Stomach (tissue), 19 donors: ENCODE measurements at regions of chr11 and their contacts with region 1.

Region 1: DNA sequence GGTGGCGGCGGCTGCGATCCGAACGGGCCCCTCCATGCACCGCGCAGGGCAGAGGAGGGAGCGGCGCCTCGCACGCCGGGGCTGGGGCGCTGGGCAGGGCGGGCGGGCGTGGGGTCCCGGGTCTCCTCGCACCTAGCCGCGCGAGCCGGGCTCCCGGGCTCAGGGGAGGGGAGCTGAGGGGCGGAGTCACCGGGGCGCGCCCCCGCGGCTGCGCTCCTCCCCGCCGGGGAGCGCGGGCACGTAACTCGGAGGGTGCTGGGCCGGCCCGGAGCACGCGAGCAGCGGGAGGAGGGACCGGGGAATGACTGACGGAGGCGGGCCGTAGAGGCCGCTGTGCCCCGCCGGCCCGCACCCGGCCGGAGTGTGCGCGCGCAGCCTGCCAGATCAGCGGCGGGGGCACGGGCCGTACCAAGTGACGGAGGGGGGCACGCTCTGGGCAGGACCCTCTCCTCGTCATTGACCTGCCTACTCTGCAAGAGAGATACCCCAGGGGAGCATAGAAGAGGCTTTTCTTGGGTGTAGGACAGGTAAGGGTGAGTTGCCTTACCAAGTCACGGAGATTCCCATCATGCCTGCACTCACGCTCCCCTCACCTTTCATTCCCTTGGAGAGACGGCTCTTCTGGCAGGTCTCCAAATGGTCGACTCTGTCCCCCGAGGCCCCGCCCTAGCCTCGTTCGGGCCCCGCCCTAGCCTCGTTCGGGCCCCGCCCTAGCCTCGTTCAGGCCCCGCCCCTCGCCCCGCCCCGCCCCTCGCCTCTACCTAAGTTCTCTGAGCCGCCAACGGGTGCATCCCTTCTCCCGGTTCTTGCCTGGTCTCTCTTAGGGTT is at the start of gene CDON:
- DNase-seq: peak; percentile 95 to 98
- H3K4me3 ChIP-seq: peak within 1 kb of the TSS; percentile 75 to 93 (median 78)
- H3K27ac ChIP-seq: peak within 1 kb of the TSS; percentile 78 to 87 (median 80)
- H3K4me1 ChIP-seq: peaks cover 0 to 32% (median 18%) of the 10 kb centered on the region in 4 donors
- H3K27me3 ChIP-seq: peaks cover 0 to 24% (median 4%) of the 10 kb centered on the region in 3 donors
- CTCF ChIP-seq: peak in 2 of 7 experiments; percentile 31 to 32
- EP300 ChIP-seq: no peak
- POLR2A ChIP-seq: no peak
- total RNA-seq, gene CDON: 16.1 to 80.8 (median 26.8) TPM

Region 2: GRCh38 chr11:125923012-125923579 is 139.8 kb before region 1 on chr11:
- intact Hi-C with region 1: loop called (anchors 10 kb)
- DNase-seq: peak; percentile 63 to 92
- H3K4me3 ChIP-seq: no peak overlapping the region
- H3K27ac ChIP-seq: no peak overlapping the region
- H3K4me1 ChIP-seq: peaks cover 0 to 12% (median 0%) of the 10 kb centered on the region in 4 donors
- H3K27me3 ChIP-seq: peaks cover 0 to 52% (median 13%) of the 10 kb centered on the region in 3 donors
- CTCF ChIP-seq: peak in 5 of 7 experiments; percentile 54 to 68 (median 64)
- EP300 ChIP-seq: no peak
- POLR2A ChIP-seq: no peak

Region 3: DNA sequence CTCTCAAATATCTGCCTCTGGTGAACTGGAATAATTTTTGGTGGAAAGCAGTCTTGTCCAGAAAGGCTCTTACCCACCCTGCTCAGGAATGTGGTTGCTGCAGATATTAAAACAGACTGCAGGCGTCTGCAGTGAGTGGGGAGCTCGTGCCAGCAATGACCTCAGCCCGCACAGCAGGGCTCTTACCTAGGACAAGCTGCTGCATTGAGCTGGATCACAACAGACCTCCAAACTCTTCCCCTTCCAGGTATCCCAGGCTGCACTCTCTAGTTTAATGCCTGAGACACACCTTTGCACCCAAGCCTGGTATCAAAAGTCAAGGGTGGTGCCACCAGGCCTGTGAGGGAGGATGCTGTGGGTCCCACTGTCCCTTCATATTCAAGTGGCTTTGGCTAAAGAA is 69.4 kb after region 1 on chr11:
- intact Hi-C with region 1: loop called (anchors 10 kb)
- DNase-seq: peak; percentile 70 to 91
- H3K4me3 ChIP-seq: no peak overlapping the region
- H3K27ac ChIP-seq: peak overlapping the region in 2 of 5 donors; percentile 39 to 58
- H3K4me1 ChIP-seq: peaks cover 9 to 67% (median 44%) of the 10 kb centered on the region in 4 donors
- H3K27me3 ChIP-seq: peaks cover 0 to 5% (median 0%) of the 10 kb centered on the region in 3 donors
- CTCF ChIP-seq: no peak
- EP300 ChIP-seq: no peak
- POLR2A ChIP-seq: no peak

Region 4: DNA sequence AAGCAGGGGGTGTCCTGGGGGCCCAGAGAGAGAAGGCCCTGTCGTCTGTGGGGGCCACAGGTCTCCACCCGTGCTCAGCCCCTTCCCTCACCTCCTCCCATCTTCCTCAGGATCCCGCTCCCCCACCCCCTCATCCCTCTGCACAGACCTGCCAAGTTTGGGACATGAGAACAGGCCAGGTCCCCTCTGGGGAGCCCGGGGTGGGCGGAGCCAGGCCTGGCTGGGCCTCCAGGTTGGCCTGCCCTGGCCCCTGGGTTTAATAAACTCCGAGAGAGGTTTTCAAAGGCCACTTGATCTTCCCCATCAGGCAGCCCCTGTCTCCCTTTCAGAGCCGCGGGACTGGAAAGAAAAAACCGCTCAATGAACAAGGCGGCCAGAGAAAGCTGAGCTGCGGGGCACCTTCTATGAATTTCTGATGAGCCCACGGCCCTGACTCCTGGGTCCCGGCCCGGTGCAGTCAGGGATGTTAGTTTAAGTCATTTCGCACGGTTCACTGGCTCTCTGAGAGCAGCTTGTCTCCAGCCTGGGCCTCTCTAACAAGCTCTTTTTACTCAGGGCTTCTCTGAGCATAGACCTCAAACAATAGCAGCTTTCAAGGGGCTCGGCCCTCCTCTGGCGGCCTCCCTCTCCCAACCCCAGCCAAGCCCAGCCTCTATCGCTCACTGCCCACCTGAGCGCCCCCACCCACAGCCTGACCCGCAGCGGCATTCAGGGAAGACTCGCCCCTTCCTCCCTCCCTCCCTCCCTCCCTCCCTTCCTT is 83.7 kb after region 1 on chr11:
- intact Hi-C with region 1: no loop called
- DNase-seq: peak in 1 of 2 donors; percentile 64
- H3K4me3 ChIP-seq: no peak overlapping the region
- H3K27ac ChIP-seq: peak overlapping the region in 1 of 5 donors; percentile 2
- H3K4me1 ChIP-seq: peaks cover 0 to 20% (median 10%) of the 10 kb centered on the region in 4 donors
- H3K27me3 ChIP-seq: peaks cover 0 to 5% (median 0%) of the 10 kb centered on the region in 3 donors
- CTCF ChIP-seq: no peak
- EP300 ChIP-seq: no peak
- POLR2A ChIP-seq: no peak

Region 5: DNA sequence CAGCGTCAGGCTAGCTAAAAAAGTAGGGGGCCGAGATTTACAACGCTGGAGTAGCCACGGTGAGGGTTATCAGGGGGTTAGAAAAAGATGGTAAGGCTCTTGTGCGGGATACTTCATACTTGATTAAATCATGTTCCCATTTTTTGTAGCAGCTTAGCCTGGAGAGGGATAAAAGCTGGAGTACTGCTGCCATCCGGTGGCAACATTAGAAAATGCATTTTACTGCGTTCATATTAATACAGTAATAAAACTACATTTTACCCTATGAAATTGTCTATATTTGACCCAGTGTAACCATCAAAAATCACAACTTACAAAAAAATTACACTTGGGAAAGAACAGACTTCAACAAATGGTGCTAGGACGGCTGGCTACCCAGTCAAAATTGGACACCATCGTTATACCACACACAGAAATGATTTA is 131.2 kb after region 1 on chr11:
- intact Hi-C with region 1: loop called (anchors 10 kb)
- DNase-seq: peak; percentile 34 to 81
- H3K4me3 ChIP-seq: no peak overlapping the region
- H3K27ac ChIP-seq: no peak overlapping the region
- H3K4me1 ChIP-seq: peaks cover 0 to 17% (median 3%) of the 10 kb centered on the region in 4 donors
- H3K27me3 ChIP-seq: no peaks in the 10 kb centered on the region
- CTCF ChIP-seq: peak in 5 of 7 experiments; percentile 47 to 78 (median 64)
- EP300 ChIP-seq: no peak
- POLR2A ChIP-seq: no peak